Right cardiac atrium (tissue), 5 donors: ENCODE measurements at regions of chr14 and their contacts with region 1.

Region 1: GRCh38 chr14:34059855-34060638 is 109.2 kb upstream of the EGLN3 start:
- DNase-seq: peak; percentile 86 to 93 (median 92)
- ATAC-seq: peak; percentile 97 to 98
- H3K4me3 ChIP-seq: peak overlapping the region; percentile 57
- H3K27ac ChIP-seq: peak overlapping the region; percentile 94
- H3K4me1 ChIP-seq: peaks cover 4% of the 10 kb centered on the region
- H3K27me3 ChIP-seq: no peaks in the 10 kb centered on the region

Region 2: GRCh38 chr14:33943096-33943884 is 116.8 kb before region 1 on chr14:
- intact Hi-C with region 1: loop called in 2 of 4 experiments (anchors 10 kb)
- DNase-seq: peak in 1 of 3 donors; percentile 46
- ATAC-seq: no peak
- H3K4me3 ChIP-seq: no peak overlapping the region
- H3K27ac ChIP-seq: no peak overlapping the region
- H3K4me1 ChIP-seq: no peaks in the 10 kb centered on the region
- H3K27me3 ChIP-seq: no peaks in the 10 kb centered on the region

Region 3: DNA sequence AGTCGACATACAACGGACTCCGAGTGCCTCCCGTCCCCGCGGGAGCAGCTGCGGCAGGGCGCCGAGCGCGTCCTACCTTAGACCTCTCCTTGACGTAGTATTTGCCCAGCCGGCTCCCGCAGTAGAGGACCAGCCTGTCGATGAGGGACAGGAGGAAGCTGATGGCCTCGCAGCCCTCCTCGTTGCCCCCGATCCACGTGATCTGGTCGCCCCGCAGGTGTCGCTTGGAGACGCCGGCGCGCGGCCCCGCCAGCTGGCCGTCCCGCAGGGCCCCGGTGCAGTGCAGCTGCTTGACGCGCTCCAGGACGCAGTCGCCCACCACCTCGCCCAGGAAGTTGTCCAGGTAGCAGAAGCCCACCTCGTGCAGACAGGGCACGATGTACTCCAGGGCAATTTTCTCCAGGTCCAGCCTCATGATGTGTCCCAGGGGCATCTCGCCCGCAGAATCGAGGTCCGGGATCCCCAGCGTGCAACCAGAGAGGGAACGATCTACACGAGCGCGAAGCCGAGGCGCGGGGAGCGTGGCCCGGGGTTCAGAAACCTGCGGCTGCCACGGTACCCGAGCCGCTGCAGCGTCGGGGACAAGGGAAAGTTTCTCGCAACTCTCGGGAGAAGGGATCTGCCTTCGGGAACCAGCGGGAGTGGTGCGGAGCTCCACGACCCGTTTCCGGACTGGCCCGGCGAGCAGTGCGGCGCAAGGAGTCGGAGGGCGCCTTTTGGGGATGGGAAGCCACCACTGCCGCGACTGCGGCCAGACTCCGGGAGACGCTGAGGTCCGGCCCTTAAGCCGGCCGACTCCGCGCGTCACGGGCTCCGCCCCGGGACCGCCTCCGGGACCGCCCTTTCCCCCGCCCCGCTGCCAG is 109.5 kb before region 1 on chr14 and contains the start of gene EGLN3:
- intact Hi-C with region 1: loop called in 3 of 4 experiments (anchors 10 kb)
- DNase-seq: peak; percentile 91 to 97 (median 96)
- ATAC-seq: peak; percentile 99
- H3K4me3 ChIP-seq: peak within 1 kb of the TSS; percentile 71
- H3K27ac ChIP-seq: peak within 1 kb of the TSS; percentile 49
- H3K4me1 ChIP-seq: peaks cover 2% of the 10 kb centered on the region
- H3K27me3 ChIP-seq: no peaks in the 10 kb centered on the region
- total RNA-seq, gene EGLN3: 62.4 to 98.9 (median 84.7) TPM

Region 4: GRCh38 chr14:34003691-34004090 is 56.4 kb before region 1 on chr14:
- intact Hi-C with region 1: no loop called
- DNase-seq: no peak
- ATAC-seq: peak in 1 of 2 donors; percentile 21
- H3K4me3 ChIP-seq: no peak overlapping the region
- H3K27ac ChIP-seq: no peak overlapping the region
- H3K4me1 ChIP-seq: peaks cover 3% of the 10 kb centered on the region
- H3K27me3 ChIP-seq: no peaks in the 10 kb centered on the region